Activated naive CD8-positive, alpha-beta T cell treated with anti-CD3 and anti-CD28 coated beads, Interleukin-2, amount 10 ng/mL, durations not matched to agents 7 days and 5 days (primary cell): ENCODE measurements at regions of chr20 and their contacts with region 1.

Region 1: GRCh38 chr20:49186535-49187329 is 1.4 kb downstream of the STAU1 start:
- DNase-seq: peak; percentile 45
- ATAC-seq: peak; percentile 18
- H3K4me3 Mint-ChIP-seq: peak overlapping the region; percentile 96
- H3K27ac Mint-ChIP-seq: peak overlapping the region; percentile 84
- H3K4me1 Mint-ChIP-seq: peaks cover 35% of the 10 kb centered on the region
- H3K27me3 Mint-ChIP-seq: peaks cover 10% of the 10 kb centered on the region

Region 2: GRCh38 chr20:49166534-49167449 is 19.9 kb before region 1 on chr20:
- POLR2A ChIA-PET with region 1: interaction called, 20 read pairs
- DNase-seq: no peak
- ATAC-seq: peak; percentile 87
- H3K4me3 Mint-ChIP-seq: peak overlapping the region; percentile 76
- H3K27ac Mint-ChIP-seq: peak overlapping the region; percentile 80
- H3K4me1 Mint-ChIP-seq: peaks cover 37% of the 10 kb centered on the region
- H3K27me3 Mint-ChIP-seq: no peaks in the 10 kb centered on the region

Region 3: GRCh38 chr20:49219089-49219923 is 32.6 kb after region 1 on chr20 and contains the start of gene DDX27:
- POLR2A ChIA-PET with region 1: interaction called, 28 read pairs
- DNase-seq: peak; percentile 94
- ATAC-seq: peak; percentile 92
- H3K4me3 Mint-ChIP-seq: peak within 1 kb of the TSS; percentile 97
- H3K27ac Mint-ChIP-seq: peak within 1 kb of the TSS; percentile 99
- H3K4me1 Mint-ChIP-seq: peaks cover 15% of the 10 kb centered on the region
- H3K27me3 Mint-ChIP-seq: no peaks in the 10 kb centered on the region
- total RNA-seq, gene DDX27: 46.1 to 47.6 TPM

Region 4: GRCh38 chr20:49237531-49237930 is 50.8 kb after region 1 on chr20:
- POLR2A ChIA-PET with region 1: no interaction called
- DNase-seq: no peak
- ATAC-seq: no peak
- H3K4me3 Mint-ChIP-seq: no peak overlapping the region
- H3K27ac Mint-ChIP-seq: peak overlapping the region; percentile 54
- H3K4me1 Mint-ChIP-seq: no peaks in the 10 kb centered on the region
- H3K27me3 Mint-ChIP-seq: no peaks in the 10 kb centered on the region